SK-N-SH (cell line): ENCODE measurements at regions of chr21 and their contacts with region 1.

Region 1: DNA sequence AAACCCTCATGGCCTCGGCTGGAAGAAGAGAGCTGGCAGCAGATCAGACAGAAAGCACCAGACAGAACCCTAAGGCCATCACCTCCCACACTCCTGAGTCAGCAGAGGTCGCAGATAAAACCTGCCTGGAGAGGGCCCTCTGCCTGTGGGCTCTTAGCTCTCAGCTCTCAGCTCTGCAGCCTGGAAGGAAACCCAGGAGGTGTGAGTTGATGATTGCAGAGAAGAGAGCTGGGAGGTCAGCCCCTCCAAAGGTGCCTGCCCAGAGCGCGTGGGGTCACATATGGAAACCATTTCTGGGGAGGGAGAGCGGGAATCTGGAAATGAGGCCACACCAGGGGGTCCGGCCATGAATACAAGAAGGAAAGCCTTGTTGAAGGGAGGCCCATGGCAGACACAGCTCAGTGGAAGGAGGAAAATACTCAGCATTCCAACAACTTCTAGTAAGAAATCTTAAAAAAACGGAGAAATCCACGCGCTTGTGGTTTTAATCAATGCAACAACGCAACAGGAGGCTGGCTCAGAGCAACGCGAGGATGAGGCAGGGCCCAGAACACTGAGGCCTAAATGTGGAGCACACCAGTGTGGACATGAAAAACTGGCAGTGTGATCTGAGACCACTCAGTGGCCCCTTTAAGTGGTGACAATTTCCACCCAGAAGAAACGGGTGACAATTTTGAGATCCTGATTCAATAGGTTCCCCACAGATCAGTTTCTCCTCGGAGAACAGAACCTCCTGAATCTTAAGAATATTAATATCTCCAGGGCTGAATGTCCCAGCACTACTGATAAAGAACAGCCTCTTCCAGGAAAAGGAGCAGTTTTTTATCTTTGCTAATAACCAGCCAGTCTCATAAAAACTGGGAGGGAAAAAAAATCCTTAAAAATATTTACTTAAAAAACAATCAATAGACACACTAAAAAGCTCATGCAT is 45.7 kb downstream of the PSMG1 start:
- DNase-seq: peak; percentile 56
- H3K4me3 ChIP-seq: no peak overlapping the region
- H3K27ac ChIP-seq: peak overlapping the region in 1 of 2 experiments; percentile 71; a peak in 2 of 4 replicates
- H3K4me1 ChIP-seq: peaks cover 3 to 30% of the 10 kb centered on the region in 2 experiments; a peak in 1 of 4 replicates
- H3K27me3 ChIP-seq: no peaks in the 10 kb centered on the region
- CTCF ChIP-seq: no peak
- EP300 ChIP-seq: peak in 1 of 2 experiments; percentile 54; a peak in 1 of 4 replicates
- RAD21 ChIP-seq: peak; percentile 30; the same call in 1 of the 2 replicates

Region 2: DNA sequence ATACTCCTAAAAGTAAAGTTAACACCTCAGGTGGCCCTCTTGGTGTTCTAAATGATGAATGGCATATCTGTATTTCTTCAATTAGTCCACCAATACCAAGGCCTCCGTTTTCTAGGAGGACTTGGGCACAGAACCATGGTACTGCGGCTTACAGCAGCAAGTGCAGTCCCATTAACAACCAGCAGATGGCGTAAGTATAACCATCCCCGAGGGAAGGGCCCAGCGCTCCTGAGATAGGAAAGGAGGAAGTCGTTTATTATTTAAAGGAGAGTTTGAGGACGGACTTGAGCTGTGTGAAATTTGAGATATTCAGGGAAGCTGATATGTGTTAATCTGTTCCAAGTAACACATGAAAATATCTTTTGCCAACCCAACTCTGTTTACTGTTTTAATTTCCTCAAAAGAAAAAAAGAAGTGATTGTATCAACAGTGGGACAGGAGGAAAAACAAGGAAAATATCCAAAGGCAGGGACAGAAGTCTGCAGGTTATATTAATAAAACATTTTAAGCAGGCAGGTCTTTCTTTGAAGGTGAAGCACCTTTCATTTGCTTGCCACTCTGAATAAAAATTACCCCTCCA is 918.4 kb before region 1 on chr21:
- CTCF ChIA-PET with region 1: interaction called, 11 read pairs
- POLR2A ChIA-PET with region 1: no interaction called
- DNase-seq: peak; percentile 58
- H3K4me3 ChIP-seq: no peak overlapping the region
- H3K27ac ChIP-seq: no peak overlapping the region
- H3K4me1 ChIP-seq: no peaks in the 10 kb centered on the region
- H3K27me3 ChIP-seq: no peaks in the 10 kb centered on the region
- CTCF ChIP-seq: peak; percentile 97
- EP300 ChIP-seq: no peak
- RAD21 ChIP-seq: peak; percentile 73

Region 3: DNA sequence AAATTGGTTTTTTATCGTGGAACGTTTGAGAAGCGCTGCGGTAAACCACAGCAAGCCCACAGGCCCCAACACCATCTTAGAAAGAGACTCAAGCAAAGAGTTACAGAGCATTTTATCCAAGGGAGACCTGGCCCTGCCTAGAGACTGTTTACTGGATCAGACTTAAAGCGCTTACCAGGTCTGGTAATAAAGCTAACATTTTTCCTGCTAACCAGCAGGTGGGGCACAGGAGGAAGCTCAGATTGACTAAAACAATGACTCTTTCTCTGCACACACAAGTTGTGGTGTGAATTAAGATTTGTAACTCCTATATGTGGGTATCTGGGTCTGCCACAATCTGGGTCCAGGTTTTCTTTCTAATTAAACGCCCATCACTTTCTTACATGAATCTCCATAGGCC is 468.3 kb before region 1 on chr21:
- CTCF ChIA-PET with region 1: interaction called, 35 read pairs
- POLR2A ChIA-PET with region 1: no interaction called
- DNase-seq: peak; percentile 42
- H3K4me3 ChIP-seq: no peak overlapping the region; a peak in 1 of 4 replicates
- H3K27ac ChIP-seq: no peak overlapping the region
- H3K4me1 ChIP-seq: peaks cover 0 to 5% of the 10 kb centered on the region in 2 experiments; a peak in 1 of 4 replicates
- H3K27me3 ChIP-seq: peaks cover 40% of the 10 kb centered on the region
- CTCF ChIP-seq: peak; percentile 54
- EP300 ChIP-seq: no peak
- RAD21 ChIP-seq: peak; percentile 50

Region 4: DNA sequence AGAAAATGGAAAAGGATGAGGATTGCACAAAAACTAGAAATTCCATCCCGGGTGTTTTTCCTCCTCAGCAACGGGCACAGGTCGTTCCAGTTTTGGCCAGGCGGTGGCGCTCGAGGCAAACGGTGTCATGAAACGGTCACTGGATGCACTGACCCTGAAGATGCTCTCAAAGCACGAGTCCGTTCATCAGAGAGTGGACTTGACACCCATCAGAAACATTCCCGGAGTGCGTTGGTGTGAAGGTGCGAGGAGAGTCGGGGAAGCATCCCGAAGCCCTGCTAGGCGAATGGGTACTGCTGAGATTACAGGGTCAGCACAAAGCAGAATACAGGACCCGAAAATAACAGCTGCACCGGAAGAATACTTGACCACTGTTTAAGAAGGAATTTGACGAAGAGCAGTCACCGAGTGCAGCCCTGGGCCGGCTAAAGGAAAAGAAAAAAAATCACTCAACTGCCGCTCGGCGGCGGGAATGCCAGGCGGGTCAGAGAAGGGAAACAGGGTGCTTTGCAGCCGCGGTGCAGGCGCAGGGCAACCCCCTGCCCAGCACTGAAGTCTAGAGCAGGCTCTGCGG is 403.5 kb before region 1 on chr21:
- CTCF ChIA-PET with region 1: interaction called, 104 read pairs
- POLR2A ChIA-PET with region 1: no interaction called
- DNase-seq: peak; percentile 81
- H3K4me3 ChIP-seq: peak overlapping the region; percentile 30 to 51
- H3K27ac ChIP-seq: peak overlapping the region; percentile 5 to 78; a peak in 3 of 4 replicates
- H3K4me1 ChIP-seq: peaks cover 5 to 6% of the 10 kb centered on the region in 2 experiments; a peak in 3 of 4 replicates
- H3K27me3 ChIP-seq: no peaks in the 10 kb centered on the region
- CTCF ChIP-seq: peak; percentile 94
- EP300 ChIP-seq: peak in 1 of 2 experiments; percentile 18; a peak in 1 of 4 replicates
- RAD21 ChIP-seq: peak; percentile 99

Region 5: GRCh38 chr21:38805328-38806152 is 332.0 kb before region 1 on chr21 and contains the start of gene ETS2:
- CTCF ChIA-PET with region 1: interaction called, 24 read pairs
- POLR2A ChIA-PET with region 1: interaction called, 6 read pairs
- DNase-seq: peak; percentile 91
- H3K4me3 ChIP-seq: peak within 1 kb of the TSS; percentile 68 to 86
- H3K27ac ChIP-seq: peak within 1 kb of the TSS; percentile 62 to 95
- H3K4me1 ChIP-seq: peaks cover 17 to 43% of the 10 kb centered on the region in 2 experiments
- H3K27me3 ChIP-seq: no peaks in the 10 kb centered on the region
- CTCF ChIP-seq: no peak
- EP300 ChIP-seq: no peak
- RAD21 ChIP-seq: no peak; the same call in 1 of the 2 replicates
- polyA plus RNA-seq, gene ETS2: 14.2 and 16.3 TPM in 2 replicates

Region 6: DNA sequence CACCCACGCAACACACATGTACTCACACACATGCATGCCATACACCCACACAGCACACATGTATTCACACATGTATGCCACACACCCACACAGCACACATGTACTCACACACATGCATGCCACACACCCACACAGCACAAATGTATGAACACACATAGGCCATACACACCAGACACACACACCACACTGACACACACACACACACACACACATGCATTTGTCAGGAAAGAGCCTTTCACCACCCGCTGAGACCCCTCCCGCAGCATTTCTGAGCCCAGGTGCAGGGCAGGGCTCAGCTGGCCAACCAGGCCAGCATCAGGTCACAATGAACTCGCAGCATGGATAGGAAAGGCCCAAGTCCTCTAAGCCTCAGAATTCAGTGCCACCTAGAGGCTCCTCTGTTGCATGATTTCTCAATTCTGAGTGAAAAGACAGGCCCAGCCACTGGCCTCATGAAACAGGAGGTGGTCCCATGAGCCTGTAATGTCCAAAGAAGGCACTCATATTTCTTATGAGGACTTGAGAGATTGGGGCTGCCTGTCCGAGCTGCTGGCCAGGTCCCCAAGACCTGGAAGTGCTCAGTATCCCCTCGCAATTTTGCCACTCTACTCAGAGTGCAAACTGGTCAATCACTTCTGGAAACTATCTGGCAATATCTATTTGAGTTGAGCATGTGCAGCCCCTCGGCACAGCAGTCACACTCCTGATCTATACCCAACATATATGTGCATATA is 11.6 kb before region 1 on chr21:
- CTCF ChIA-PET with region 1: interaction called, 35 read pairs
- POLR2A ChIA-PET with region 1: no interaction called
- DNase-seq: peak; percentile 70
- H3K4me3 ChIP-seq: no peak overlapping the region
- H3K27ac ChIP-seq: no peak overlapping the region
- H3K4me1 ChIP-seq: peaks cover 0 to 8% of the 10 kb centered on the region in 2 experiments; a peak in 1 of 4 replicates
- H3K27me3 ChIP-seq: no peaks in the 10 kb centered on the region
- CTCF ChIP-seq: peak; percentile 72
- EP300 ChIP-seq: no peak
- RAD21 ChIP-seq: peak; percentile 93

Region 7: GRCh38 chr21:39175154-39175553 is 37.6 kb after region 1 on chr21:
- CTCF ChIA-PET with region 1: interaction called, 28 read pairs
- POLR2A ChIA-PET with region 1: no interaction called
- DNase-seq: no peak
- H3K4me3 ChIP-seq: no peak overlapping the region
- H3K27ac ChIP-seq: no peak overlapping the region
- H3K4me1 ChIP-seq: no peaks in the 10 kb centered on the region; a peak in 1 of 4 replicates
- H3K27me3 ChIP-seq: no peaks in the 10 kb centered on the region
- CTCF ChIP-seq: peak; percentile 65
- EP300 ChIP-seq: no peak
- RAD21 ChIP-seq: peak; percentile 48; the same call in 1 of the 2 replicates